OCI-LY7 (cell line): ENCODE measurements at regions of chr6 and their contacts with region 1.

Region 1: DNA sequence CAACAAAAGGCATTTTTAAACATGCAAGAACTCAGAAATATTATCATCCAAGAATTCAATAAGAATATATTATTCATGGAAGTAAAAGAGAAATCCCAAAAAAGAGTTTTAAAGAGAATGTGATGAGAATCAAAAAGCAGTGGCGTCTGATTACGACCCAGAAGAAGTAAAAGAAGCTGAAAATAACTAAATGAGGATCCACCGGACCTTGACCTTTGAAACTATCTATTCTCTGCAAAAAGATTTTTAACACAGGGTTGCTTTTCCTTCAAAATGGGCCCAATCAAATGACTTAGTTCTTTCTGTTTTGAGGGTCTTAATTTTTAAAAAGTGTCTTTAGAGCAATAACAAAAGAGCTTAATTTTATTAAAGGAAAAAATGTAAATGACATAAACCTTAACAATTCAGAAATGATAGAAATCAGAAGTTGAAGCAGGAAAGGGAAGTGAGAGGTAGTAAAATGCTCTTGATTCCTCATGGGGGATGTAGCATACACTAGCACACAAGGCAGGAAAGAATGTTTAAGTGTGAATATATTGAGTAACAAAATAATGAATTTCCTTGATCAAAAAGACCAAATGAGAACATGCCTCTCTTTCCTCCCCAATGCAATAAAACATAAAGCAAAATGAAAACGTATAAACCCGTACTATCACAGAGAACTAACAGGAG is 223.1 kb upstream of the PRDM1 start:
- DNase-seq: peak; percentile 72
- H3K4me3 ChIP-seq: peak overlapping the region; percentile 35
- H3K27ac ChIP-seq: peak overlapping the region; percentile 89
- H3K4me1 ChIP-seq: peaks cover 38% of the 10 kb centered on the region
- CTCF ChIP-seq: no peak

Region 2: DNA sequence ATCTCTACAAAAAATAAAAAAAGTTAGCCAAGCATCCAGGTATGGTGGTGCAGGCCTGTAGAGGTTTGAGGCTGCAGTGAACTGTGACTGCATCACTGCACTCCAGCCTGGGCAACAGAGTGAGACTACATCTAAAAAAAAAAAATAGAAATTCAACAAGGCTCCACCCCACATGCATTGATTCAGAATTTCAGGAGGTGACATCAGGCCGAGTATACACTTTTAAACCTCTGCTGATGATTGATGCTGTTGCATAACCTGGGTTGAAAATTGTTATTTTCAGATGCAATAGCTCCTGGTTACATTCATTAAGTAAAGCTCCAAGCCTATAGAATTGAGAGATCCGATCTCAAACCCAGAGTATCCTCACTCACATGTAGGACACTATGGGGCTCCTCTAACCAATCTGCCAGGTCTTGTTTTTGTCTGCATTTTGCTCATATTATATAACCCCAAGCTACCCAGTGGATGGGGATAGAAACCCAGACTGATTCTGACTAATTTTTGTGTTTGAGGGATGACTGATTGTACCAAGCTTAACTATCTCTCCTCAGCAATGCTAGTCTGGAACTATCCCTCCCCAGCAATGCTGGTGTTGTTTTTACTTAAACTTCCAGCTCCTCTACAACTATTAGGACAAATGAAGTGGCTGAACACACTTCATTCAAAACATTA is 336.7 kb before region 1 on chr6:
- CTCF ChIA-PET with region 1: no interaction called
- POLR2A ChIA-PET with region 1: no interaction called
- intact Hi-C with region 1: no loop called
- DNase-seq: no peak
- H3K4me3 ChIP-seq: no peak overlapping the region
- H3K27ac ChIP-seq: no peak overlapping the region
- H3K4me1 ChIP-seq: no peaks in the 10 kb centered on the region
- CTCF ChIP-seq: no peak

Region 3: DNA sequence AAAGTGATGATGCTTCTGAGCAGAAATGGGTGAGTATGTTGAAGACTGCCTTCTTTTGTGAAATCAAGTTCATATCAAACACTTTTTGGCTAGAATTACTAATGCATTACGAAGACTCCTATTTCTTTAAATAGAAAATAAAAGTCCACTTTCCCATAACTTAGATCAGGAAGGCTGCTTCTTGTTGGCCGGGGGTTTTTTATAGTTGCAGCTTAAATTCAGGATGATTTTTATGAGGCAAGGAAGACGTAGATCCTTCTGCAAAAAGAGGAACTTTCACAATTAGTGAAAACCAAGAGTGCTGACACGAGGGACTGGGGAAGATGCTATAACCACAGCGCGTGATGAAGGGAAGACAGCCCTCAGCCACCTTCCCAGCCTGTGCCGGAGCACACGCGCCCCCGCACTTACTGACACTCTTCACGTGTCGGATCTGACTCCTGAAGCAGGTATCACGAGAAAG is 17.0 kb after region 1 on chr6:
- CTCF ChIA-PET with region 1: interaction called, 3 read pairs
- POLR2A ChIA-PET with region 1: interaction called, 26 read pairs
- intact Hi-C with region 1: no loop called
- DNase-seq: peak; percentile 63
- H3K4me3 ChIP-seq: peak overlapping the region; percentile 43
- H3K27ac ChIP-seq: peak overlapping the region; percentile 21
- H3K4me1 ChIP-seq: peaks cover 92% of the 10 kb centered on the region
- CTCF ChIP-seq: no peak